ENCODE measurements at regions of chr3 and their contacts with region 1.

Region 1: GRCh38 chr3:68909719-68910118 is 22.6 kb downstream of the TAFA4 start:
- DNase-seq: no peak
- H3K4me3 ChIP-seq: no peak overlapping the region
- H3K4me3 Mint-ChIP-seq: no peak overlapping the region
- H3K27ac ChIP-seq: no peak overlapping the region
- H3K27ac Mint-ChIP-seq: no peak overlapping the region
- H3K4me1 ChIP-seq: no peaks in the 10 kb centered on the region
- H3K4me1 Mint-ChIP-seq: no peaks in the 10 kb centered on the region
- H3K27me3 ChIP-seq: no peaks in the 10 kb centered on the region
- H3K27me3 Mint-ChIP-seq: peaks cover 18 to 65% of the 10 kb centered on the region in 2 donors

Region 2: GRCh38 chr3:68893600-68894239 is 16.0 kb before region 1 on chr3:
- CTCF ChIA-PET with region 1: interaction called, 10 read pairs
- POLR2A ChIA-PET with region 1: no interaction called
- DNase-seq: peak in 1 of 5 donors; percentile 18
- H3K4me3 ChIP-seq: no peak overlapping the region
- H3K4me3 Mint-ChIP-seq: no peak overlapping the region
- H3K27ac ChIP-seq: no peak overlapping the region
- H3K27ac Mint-ChIP-seq: no peak overlapping the region
- H3K4me1 ChIP-seq: no peaks in the 10 kb centered on the region
- H3K4me1 Mint-ChIP-seq: no peaks in the 10 kb centered on the region
- H3K27me3 ChIP-seq: no peaks in the 10 kb centered on the region
- H3K27me3 Mint-ChIP-seq: peaks cover 0 to 18% of the 10 kb centered on the region in 2 donors

Measured in CD8-positive, alpha-beta memory T cell (primary cell).